Activated T-helper 2 cell treated with anti-CD3 and anti-CD28 coated beads, Interferon-gamma antibody, Interleukin-2, Interleukin-4, amounts not matched to agents 10 μg/mL and 5 μg/mL and 100 μg/mL, durations not matched to agents 14 hours and 24 hours and 36 hours (primary cell): ENCODE measurements at regions of chr1 and their contacts with region 1.

Region 1: DNA sequence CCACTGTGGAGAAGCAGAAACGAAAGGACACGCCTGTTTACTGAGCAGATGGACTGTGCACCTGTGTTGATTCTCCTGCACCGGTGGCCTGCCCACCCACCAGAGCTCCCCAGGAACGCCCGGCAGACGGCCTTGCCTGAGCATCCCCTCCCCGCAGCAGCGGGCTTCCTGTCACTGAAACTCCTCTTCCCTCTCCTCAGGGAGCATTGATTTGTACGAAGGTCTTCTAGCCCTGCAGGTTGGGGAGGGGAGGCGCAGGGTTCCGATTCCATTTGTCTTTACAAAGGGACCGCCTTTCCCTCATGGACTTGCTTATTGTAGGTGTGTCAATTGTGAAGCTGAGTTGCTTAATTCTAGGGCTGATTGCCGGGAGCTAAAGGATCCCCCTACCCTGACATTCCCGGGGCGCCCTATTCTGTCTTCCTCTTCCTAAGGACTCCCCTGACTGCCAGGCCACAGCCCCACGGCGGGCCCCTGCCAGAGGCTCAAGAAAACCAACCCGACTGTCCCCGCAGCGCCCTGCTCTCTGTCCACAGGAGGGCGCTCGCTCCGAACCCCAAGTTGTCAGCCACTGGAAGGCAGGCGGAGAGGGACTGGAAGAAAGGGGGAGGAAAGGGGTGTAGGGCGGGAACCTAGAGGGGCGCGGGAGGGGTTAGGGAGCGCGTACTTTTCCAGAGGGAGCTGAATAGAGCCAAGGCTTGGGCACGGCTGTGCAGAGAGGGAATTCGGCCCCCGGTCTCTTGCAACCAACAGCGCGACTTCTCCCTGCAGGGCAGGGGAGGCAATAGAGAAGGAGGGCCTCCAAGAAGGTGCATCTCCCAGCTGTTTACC is 2.8 kb downstream of the S100A6 start:
- DNase-seq: peak; percentile 76
- H3K4me3 Mint-ChIP-seq: peak overlapping the region; percentile 93
- H3K27ac Mint-ChIP-seq: peak overlapping the region; percentile 84
- H3K4me1 Mint-ChIP-seq: peaks cover 51% of the 10 kb centered on the region
- H3K27me3 Mint-ChIP-seq: no peaks in the 10 kb centered on the region

Region 2: GRCh38 chr1:153510984-153511410 is 22.0 kb before region 1 on chr1:
- intact Hi-C with region 1: loop called (anchors 2 kb)
- DNase-seq: peak; percentile 64
- H3K4me3 Mint-ChIP-seq: no peak overlapping the region
- H3K27ac Mint-ChIP-seq: peak overlapping the region; percentile 56
- H3K4me1 Mint-ChIP-seq: peaks cover 11% of the 10 kb centered on the region
- H3K27me3 Mint-ChIP-seq: no peaks in the 10 kb centered on the region

Region 3: DNA sequence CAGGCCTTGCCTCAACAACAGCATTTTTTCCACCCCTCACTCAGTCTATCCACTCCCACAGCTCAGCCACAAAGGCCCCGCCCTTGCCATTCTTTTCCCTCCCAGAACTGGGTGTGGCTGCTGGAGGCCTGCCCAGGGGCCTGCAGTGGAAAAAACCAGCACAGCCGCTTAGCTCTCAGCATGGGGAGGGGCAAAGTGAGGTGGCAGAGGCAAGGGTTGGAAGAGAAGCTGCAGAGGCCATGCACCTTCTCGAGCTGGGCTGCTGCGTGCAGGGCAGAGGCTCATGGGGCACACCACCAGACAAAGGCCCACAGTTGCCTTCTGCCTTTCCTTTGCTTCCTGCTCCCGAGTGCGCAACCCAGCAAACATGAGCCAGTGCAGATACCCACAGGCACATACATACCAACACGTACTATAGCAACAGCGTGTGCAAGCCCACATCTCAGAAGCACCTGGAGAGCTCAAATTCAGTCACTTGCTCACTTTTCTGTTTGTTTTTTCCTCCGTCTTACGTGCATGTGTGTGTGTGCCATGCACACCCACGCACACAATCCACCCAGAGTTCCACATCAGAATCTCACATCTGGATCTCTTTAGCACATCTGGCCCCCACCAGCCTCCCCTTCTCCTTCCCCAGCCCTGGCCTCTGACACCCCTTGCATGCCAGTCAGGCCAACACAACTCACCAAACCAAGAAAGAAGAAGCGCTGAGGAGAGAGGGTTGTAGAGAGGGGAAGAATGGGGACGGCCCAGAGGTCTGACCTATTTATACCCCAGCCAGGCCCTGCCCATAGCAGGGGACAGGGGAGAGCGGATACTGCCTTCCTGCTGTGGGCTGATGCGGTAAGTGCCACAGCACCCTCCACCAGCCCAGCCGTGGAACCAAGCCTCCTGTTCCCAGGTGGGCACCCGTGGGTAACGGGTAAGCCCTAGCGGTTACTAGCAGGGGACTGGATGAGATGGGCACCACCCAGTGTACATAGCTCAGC is 12.4 kb after region 1 on chr1 and contains the start of gene S100A4:
- intact Hi-C with region 1: loop called (anchors 1 kb)
- DNase-seq: peak; percentile 95
- H3K4me3 Mint-ChIP-seq: peak within 1 kb of the TSS; percentile 88
- H3K27ac Mint-ChIP-seq: peak within 1 kb of the TSS; percentile 97
- H3K4me1 Mint-ChIP-seq: peaks cover 70% of the 10 kb centered on the region
- H3K27me3 Mint-ChIP-seq: no peaks in the 10 kb centered on the region
- total RNA-seq, gene S100A4: 175 and 181 TPM in 2 replicates

Region 4: DNA sequence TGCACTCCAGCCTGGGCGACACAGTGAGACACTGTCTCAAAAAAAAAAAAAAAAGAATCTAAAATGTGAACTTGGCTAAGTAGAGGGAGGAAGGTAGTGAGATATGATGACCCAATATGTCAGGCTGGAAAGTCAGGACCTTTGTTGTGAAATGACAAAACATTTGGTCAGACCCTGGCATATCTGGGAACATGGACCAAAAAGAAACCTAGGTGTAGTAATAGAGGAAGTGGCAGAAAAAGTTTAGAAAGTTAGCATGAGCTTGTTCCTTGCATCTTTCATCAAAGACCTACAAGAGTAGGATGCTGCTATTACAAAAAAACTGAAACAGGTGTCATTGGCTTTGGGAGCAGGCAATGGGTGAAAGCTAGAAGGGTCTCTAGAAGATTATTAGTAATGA is 23.4 kb after region 1 on chr1:
- intact Hi-C with region 1: no loop called
- DNase-seq: no peak
- H3K4me3 Mint-ChIP-seq: no peak overlapping the region
- H3K27ac Mint-ChIP-seq: no peak overlapping the region
- H3K4me1 Mint-ChIP-seq: peaks cover 6% of the 10 kb centered on the region
- H3K27me3 Mint-ChIP-seq: peaks cover under 1% of the 10 kb centered on the region

Region 5: DNA sequence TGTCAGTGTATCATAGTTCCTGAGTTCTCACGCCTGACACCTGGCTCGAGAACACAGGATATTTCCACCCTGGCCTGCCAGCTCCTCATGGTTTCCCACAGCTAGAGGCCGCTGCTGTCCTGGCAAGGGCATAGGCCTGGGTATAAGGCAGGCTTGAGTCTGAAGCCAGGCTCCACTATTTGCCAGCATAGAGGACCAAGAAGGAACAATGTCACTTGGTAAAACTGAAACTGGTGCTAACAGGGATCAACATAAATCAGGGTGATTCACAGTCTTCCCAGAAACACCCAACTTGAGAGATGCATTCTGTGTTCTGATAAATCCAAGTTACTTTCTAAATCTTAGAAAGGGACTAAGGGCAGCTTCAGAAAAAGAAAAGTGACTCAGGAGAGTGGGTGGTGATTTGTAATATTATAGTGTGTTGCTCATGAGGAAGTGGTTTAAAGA is 39.6 kb after region 1 on chr1:
- intact Hi-C with region 1: loop called (anchors 1 kb)
- DNase-seq: peak; percentile 38
- H3K4me3 Mint-ChIP-seq: no peak overlapping the region
- H3K27ac Mint-ChIP-seq: no peak overlapping the region
- H3K4me1 Mint-ChIP-seq: peaks cover 31% of the 10 kb centered on the region
- H3K27me3 Mint-ChIP-seq: peaks cover 9% of the 10 kb centered on the region

Region 6: DNA sequence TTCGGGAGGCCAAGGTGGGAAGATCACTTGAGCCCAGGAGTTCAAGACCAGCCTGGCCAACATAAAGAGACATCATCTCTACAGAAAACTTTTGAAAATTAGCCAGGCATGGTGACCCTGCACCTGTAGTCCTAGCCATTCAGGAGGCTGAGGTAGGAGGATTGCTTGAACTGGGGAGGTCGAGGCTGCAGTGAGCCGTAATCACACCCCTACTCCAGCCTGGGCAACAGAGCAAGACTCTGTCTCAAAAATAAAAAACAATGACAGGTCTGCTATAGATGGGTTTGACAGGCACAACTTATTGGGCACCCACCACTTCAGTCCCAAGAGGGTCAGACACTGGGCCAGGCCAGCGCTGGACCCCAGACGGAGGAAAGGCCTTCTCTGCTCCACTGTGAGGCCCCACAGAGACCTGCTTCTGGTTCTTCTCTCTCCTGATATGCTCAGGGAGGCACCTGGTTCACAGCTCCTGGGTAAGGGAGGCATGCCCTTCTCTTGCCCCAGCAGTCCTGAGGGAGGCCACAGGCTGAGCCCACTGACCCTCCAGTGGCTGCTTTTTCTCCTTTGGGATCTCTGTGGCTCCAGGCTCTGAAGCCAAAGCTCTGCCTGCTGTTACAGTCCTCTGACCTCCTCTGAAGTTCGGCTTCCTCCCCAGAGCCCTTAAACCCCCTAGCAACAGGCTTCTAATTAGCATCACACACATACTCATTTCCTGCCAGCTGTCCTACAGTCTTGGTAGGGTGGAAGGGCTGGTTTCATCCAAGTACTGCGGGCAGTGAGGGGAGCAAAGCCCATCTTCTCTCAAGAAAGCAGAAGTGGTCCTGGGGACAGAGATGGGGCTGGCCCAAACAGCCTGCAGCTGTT is 65.6 kb after region 1 on chr1:
- intact Hi-C with region 1: loop called (anchors 2 kb)
- DNase-seq: no peak
- H3K4me3 Mint-ChIP-seq: no peak overlapping the region
- H3K27ac Mint-ChIP-seq: peak overlapping the region; percentile 23
- H3K4me1 Mint-ChIP-seq: peaks cover 21% of the 10 kb centered on the region
- H3K27me3 Mint-ChIP-seq: no peaks in the 10 kb centered on the region

Region 7: GRCh38 chr1:153617675-153618074 is 84.7 kb after region 1 on chr1:
- intact Hi-C with region 1: loop called (anchors 2 kb)
- DNase-seq: peak; percentile 70
- H3K4me3 Mint-ChIP-seq: no peak overlapping the region
- H3K27ac Mint-ChIP-seq: no peak overlapping the region
- H3K4me1 Mint-ChIP-seq: peaks cover 4% of the 10 kb centered on the region
- H3K27me3 Mint-ChIP-seq: no peaks in the 10 kb centered on the region

Region 8: DNA sequence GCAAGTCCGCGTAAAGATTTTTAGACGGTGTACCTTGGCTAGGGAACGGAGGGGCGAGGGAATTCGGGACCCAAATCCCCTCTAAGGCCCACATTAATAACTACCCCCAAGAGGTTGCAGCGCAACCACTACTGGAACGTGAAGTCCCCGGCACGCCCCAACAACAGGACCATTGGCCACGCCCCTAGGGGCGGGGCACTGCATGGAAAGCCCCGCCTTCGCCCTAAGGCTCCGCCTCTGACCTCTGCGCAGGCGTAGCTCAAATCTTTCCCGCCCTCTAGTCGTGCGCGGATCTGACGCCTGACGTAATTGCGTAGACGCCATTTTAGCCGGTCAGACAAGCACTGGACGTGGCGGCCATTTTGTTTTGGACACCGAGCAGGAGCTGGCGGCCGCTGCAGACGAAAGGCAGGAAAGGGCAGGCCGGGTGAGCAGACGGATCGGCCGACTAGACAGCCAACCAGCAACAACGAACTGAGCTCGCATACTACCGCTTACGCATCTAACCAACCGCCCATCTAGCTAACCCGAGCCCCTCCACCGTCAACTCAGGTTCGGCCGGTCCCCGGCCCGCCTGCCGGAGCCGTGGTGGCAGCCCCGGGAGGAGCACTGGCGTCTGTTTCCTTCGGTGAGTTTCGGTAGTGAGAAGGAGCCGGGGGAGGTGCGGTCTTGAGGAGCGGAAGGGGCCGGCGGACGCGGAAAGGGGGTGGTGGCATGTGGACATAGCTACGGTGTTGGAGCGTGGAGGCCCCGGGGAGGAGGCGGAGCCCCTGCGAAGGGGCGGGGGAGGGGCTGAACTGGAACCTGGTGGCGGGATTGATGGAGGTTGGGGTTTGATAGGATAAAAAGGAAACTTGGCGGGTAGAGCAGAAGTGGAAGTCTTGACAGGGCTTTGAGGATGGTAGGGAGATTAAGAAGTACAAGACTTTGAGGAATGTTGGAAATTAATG is 101.0 kb after region 1 on chr1 and contains the start of gene CHTOP:
- intact Hi-C with region 1: loop called (anchors 2 kb)
- DNase-seq: peak; percentile 96
- H3K4me3 Mint-ChIP-seq: peak within 1 kb of the TSS; percentile 96
- H3K27ac Mint-ChIP-seq: peak within 1 kb of the TSS; percentile 100
- H3K4me1 Mint-ChIP-seq: peaks cover 28% of the 10 kb centered on the region
- H3K27me3 Mint-ChIP-seq: no peaks in the 10 kb centered on the region
- total RNA-seq, gene CHTOP: 94.6 and 98.7 TPM in 2 replicates

Region 9: GRCh38 chr1:153649863-153650235 is 116.9 kb after region 1 on chr1:
- intact Hi-C with region 1: no loop called
- DNase-seq: no peak
- H3K4me3 Mint-ChIP-seq: no peak overlapping the region
- H3K27ac Mint-ChIP-seq: no peak overlapping the region
- H3K4me1 Mint-ChIP-seq: peaks cover 8% of the 10 kb centered on the region
- H3K27me3 Mint-ChIP-seq: no peaks in the 10 kb centered on the region